Mammary epithelial cell (primary cell): ENCODE measurements at regions of chr19 and their contacts with region 1.

Region 1: DNA sequence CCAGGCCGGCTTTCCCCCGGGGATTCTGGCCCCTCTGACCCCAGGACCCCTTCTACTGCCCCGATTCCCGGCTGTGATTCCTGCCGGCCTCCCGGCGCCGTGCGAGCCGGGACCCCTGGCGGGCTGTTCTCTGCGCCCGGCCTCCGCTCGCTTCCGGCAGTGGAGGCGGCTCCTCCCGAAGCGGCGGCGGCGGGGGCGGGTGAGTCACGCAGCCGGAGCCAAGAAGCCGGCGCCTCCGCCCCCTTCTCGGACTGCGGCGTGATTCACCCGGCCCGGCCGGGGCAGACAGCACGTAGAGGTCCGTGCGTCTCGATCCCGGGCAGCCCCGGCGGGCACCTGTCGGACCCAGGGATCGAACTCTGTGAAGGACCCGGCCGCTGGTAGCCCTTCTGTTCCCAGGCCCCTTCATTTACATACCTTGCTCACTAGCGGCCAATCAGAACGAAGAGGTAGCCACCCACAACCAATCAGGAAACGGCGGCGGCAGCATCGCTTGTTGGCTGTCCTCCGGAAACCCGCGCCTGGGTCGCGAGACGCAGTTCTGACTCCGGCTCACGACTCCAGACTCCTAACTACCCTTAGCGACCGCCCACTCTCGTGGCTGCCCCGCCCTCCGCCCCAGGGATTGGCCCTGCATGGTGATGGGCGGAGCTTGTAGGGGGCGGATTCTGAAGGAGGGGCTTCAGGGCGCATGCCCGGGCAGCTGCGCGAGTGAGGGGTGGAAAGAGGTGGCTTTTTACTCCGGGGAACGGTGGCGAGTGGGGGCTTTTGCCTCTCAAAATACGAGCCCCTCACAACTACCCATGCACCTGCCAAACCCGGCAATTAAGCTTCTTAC is at the start of gene SERTAD1:
- DNase-seq: peak; percentile 99
- H3K4me3 ChIP-seq: peak within 1 kb of the TSS; percentile 77 to 92 (median 83)
- H3K27ac ChIP-seq: peak within 1 kb of the TSS; percentile 89
- H3K4me1 ChIP-seq: peaks cover 34% of the 10 kb centered on the region
- H3K27me3 ChIP-seq: no peaks in the 10 kb centered on the region
- CTCF ChIP-seq: peak; percentile 21 to 73
- total RNA-seq, gene SERTAD1: 20.6 to 25.8 TPM

Region 2: GRCh38 chr19:40221858-40222837 is 203.5 kb before region 1 on chr19:
- CTCF ChIA-PET with region 1: no interaction called
- dilution Hi-C with region 1: no loop called
- in situ Hi-C with region 1: no loop called
- intact Hi-C with region 1: no loop called
- DNase-seq: peak; percentile 78
- H3K4me3 ChIP-seq: no peak overlapping the region
- H3K27ac ChIP-seq: no peak overlapping the region
- H3K4me1 ChIP-seq: peaks cover 26% of the 10 kb centered on the region
- H3K27me3 ChIP-seq: no peaks in the 10 kb centered on the region
- CTCF ChIP-seq: peak; percentile 75 to 85

Region 3: GRCh38 chr19:40365613-40366401 is 59.9 kb before region 1 on chr19:
- CTCF ChIA-PET with region 1: interaction called, 11 read pairs
- dilution Hi-C with region 1: no loop called
- in situ Hi-C with region 1: no loop called
- intact Hi-C with region 1: no loop called
- DNase-seq: no peak
- H3K4me3 ChIP-seq: peak overlapping the region; percentile 50 to 54 (median 53)
- H3K27ac ChIP-seq: no peak overlapping the region
- H3K4me1 ChIP-seq: peaks cover 9% of the 10 kb centered on the region
- H3K27me3 ChIP-seq: no peaks in the 10 kb centered on the region
- CTCF ChIP-seq: no peak

Region 4: GRCh38 chr19:40444192-40445028 is 18.7 kb after region 1 on chr19 and contains the start of gene SERTAD3:
- CTCF ChIA-PET with region 1: no interaction called
- dilution Hi-C with region 1: no loop called
- in situ Hi-C with region 1: no loop called
- intact Hi-C with region 1: loop called (anchors 1 kb)
- DNase-seq: peak; percentile 94
- H3K4me3 ChIP-seq: peak within 1 kb of the TSS; percentile 92 to 100 (median 95)
- H3K27ac ChIP-seq: peak within 1 kb of the TSS; percentile 95
- H3K4me1 ChIP-seq: peaks cover 35% of the 10 kb centered on the region
- H3K27me3 ChIP-seq: no peaks in the 10 kb centered on the region
- CTCF ChIP-seq: peak in 1 of 2 donors; percentile 7
- total RNA-seq, gene SERTAD3: 34.3 to 35.8 TPM

Region 5: GRCh38 chr19:40523322-40524047 is 97.8 kb after region 1 on chr19:
- CTCF ChIA-PET with region 1: no interaction called
- dilution Hi-C with region 1: no loop called
- in situ Hi-C with region 1: no loop called
- intact Hi-C with region 1: loop called (anchors 2 kb)
- DNase-seq: peak; percentile 42
- H3K4me3 ChIP-seq: no peak overlapping the region
- H3K27ac ChIP-seq: no peak overlapping the region
- H3K4me1 ChIP-seq: no peaks in the 10 kb centered on the region
- H3K27me3 ChIP-seq: no peaks in the 10 kb centered on the region
- CTCF ChIP-seq: peak; percentile 55 to 57

Region 6: GRCh38 chr19:40603389-40604135 is 177.9 kb after region 1 on chr19:
- CTCF ChIA-PET with region 1: no interaction called
- dilution Hi-C with region 1: loop called (anchors 5 kb)
- in situ Hi-C with region 1: no loop called
- intact Hi-C with region 1: loop called (anchors 1 kb)
- DNase-seq: peak; percentile 97
- H3K4me3 ChIP-seq: peak overlapping the region; percentile 32 to 50 (median 37)
- H3K27ac ChIP-seq: peak overlapping the region; percentile 39
- H3K4me1 ChIP-seq: peaks cover 50% of the 10 kb centered on the region
- H3K27me3 ChIP-seq: no peaks in the 10 kb centered on the region
- CTCF ChIP-seq: peak in 1 of 2 donors; percentile 32